CD8-positive, alpha-beta T cell (primary cell): ENCODE measurements at regions of chr12 and their contacts with region 1.

Region 1: DNA sequence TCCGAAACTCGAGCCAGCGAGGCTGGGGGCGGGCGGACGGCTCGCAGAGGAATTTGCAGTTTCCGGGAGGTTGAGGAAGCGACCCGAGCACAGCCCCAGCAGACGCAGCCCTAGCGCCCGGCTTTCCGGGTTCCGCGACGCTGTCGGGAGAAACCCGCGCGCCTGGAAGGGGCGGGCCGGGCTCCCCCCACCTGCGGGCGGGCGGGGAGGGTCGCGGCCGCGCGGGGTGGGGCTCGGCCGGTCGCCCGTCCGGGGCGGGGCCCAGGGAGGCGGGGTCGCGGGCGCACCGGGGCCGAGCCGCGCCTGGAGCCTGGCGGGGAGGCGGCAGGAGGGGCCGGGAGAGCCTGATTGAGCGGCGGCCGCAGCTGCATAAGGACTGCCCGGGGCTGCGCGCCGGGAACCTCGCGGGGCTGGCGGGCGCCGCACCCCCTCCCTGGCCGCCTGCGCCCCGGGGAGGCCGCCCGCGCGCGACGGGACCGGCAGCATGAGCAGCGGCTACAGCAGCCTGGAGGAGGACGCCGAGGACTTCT is at the start of gene RASSF3:
- DNase-seq: peak; percentile 39 to 90 (median 78)
- ATAC-seq: peak; percentile 62
- H3K4me3 ChIP-seq: peak within 1 kb of the TSS; percentile 96
- H3K4me3 Mint-ChIP-seq: peak within 1 kb of the TSS; percentile 90
- H3K27ac ChIP-seq: peak within 1 kb of the TSS; percentile 58 to 82
- H3K27ac Mint-ChIP-seq: peak within 1 kb of the TSS; percentile 96
- H3K4me1 ChIP-seq: peaks cover 21% of the 10 kb centered on the region
- H3K4me1 Mint-ChIP-seq: peaks cover 34% of the 10 kb centered on the region
- H3K27me3 ChIP-seq: no peaks in the 10 kb centered on the region
- H3K27me3 Mint-ChIP-seq: no peaks in the 10 kb centered on the region
- CTCF ChIP-seq: no peak
- total RNA-seq, gene RASSF3: 109 to 118 TPM

Region 2: GRCh38 chr12:64403707-64404469 is 206.3 kb before region 1 on chr12 and contains the start of gene XPOT:
- CTCF ChIA-PET with region 1: interaction called, 3 read pairs
- POLR2A ChIA-PET with region 1: no interaction called
- intact Hi-C with region 1: loop called (anchors 5 to 10 kb)
- DNase-seq: peak; percentile 85 to 99 (median 90)
- ATAC-seq: peak; percentile 87
- H3K4me3 ChIP-seq: peak within 1 kb of the TSS; percentile 92 to 98
- H3K4me3 Mint-ChIP-seq: peak within 1 kb of the TSS; percentile 97
- H3K27ac ChIP-seq: peak within 1 kb of the TSS; percentile 79 to 85
- H3K27ac Mint-ChIP-seq: peak within 1 kb of the TSS; percentile 98
- H3K4me1 ChIP-seq: peaks cover 9% of the 10 kb centered on the region
- H3K4me1 Mint-ChIP-seq: peaks cover 28% of the 10 kb centered on the region
- H3K27me3 ChIP-seq: no peaks in the 10 kb centered on the region
- H3K27me3 Mint-ChIP-seq: no peaks in the 10 kb centered on the region
- CTCF ChIP-seq: no peak
- total RNA-seq, gene XPOT: 37.9 to 39.5 TPM

Region 3: DNA sequence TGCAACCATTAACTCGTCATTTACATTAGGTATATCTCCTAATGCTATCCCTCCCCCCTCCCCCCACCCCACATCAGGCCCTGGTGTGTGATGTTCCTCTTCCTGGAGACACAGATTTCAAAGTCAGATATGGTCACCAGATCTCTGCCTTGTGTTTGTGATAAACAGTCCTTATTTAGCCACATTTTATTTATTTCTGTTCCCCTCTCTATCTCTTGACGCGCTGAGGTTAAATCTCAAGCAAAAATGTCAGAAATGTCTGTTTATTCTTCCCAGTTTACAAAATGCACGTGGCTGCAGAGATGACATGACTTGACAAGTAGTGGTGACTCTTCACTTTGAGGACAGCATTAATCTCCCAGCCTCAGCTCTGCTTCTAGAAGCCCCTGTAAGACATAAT is 11.4 kb before region 1 on chr12:
- CTCF ChIA-PET with region 1: interaction called, 5 read pairs
- POLR2A ChIA-PET with region 1: interaction called, 3 read pairs
- intact Hi-C with region 1: loop called in 1 of 2 experiments (anchors 1 kb)
- DNase-seq: no peak
- ATAC-seq: peak; percentile 6
- H3K4me3 ChIP-seq: no peak overlapping the region
- H3K4me3 Mint-ChIP-seq: no peak overlapping the region
- H3K27ac ChIP-seq: no peak overlapping the region
- H3K27ac Mint-ChIP-seq: no peak overlapping the region
- H3K4me1 ChIP-seq: peaks cover 34% of the 10 kb centered on the region
- H3K4me1 Mint-ChIP-seq: peaks cover 37% of the 10 kb centered on the region
- H3K27me3 ChIP-seq: no peaks in the 10 kb centered on the region
- H3K27me3 Mint-ChIP-seq: no peaks in the 10 kb centered on the region
- CTCF ChIP-seq: no peak

Region 4: DNA sequence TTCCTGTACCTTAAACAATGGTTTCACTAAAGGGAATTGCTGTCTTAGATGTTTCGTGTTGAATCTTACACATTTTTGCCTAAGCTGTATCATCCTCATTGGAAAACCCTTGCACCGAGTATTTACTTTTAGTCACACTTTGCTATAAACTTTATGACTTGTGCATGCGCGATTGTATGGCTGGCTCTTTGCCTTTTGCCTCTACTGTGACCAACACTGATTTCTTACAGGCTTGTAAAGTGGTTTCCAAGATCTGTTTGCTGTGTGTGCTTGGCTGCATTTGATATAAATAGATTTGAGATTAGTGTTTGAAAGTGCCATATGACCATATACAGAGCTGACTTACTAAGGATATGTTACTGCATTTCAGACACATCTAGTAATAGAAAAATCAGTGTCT is 40.5 kb after region 1 on chr12:
- CTCF ChIA-PET with region 1: no interaction called
- POLR2A ChIA-PET with region 1: no interaction called
- intact Hi-C with region 1: loop called in 1 of 2 experiments (anchors 5 kb)
- DNase-seq: no peak
- ATAC-seq: no peak
- H3K4me3 ChIP-seq: no peak overlapping the region
- H3K4me3 Mint-ChIP-seq: peak overlapping the region; percentile 0
- H3K27ac ChIP-seq: no peak overlapping the region
- H3K27ac Mint-ChIP-seq: peak overlapping the region; percentile 68
- H3K4me1 ChIP-seq: peaks cover 62% of the 10 kb centered on the region
- H3K4me1 Mint-ChIP-seq: peaks cover 78% of the 10 kb centered on the region
- H3K27me3 ChIP-seq: no peaks in the 10 kb centered on the region
- H3K27me3 Mint-ChIP-seq: no peaks in the 10 kb centered on the region
- CTCF ChIP-seq: no peak

Region 5: GRCh38 chr12:64687816-64688215 is 77.6 kb after region 1 on chr12:
- CTCF ChIA-PET with region 1: interaction called, 18 read pairs
- POLR2A ChIA-PET with region 1: interaction called, 32 read pairs
- intact Hi-C with region 1: loop called (anchors 2 kb)
- DNase-seq: peak in 2 of 9 experiments; percentile 40 to 63
- ATAC-seq: peak; percentile 9
- H3K4me3 ChIP-seq: no peak overlapping the region
- H3K4me3 Mint-ChIP-seq: peak overlapping the region; percentile 67
- H3K27ac ChIP-seq: peak overlapping the region; percentile 26 to 57
- H3K27ac Mint-ChIP-seq: peak overlapping the region; percentile 94
- H3K4me1 ChIP-seq: peaks cover 95% of the 10 kb centered on the region
- H3K4me1 Mint-ChIP-seq: peaks cover 77% of the 10 kb centered on the region
- H3K27me3 ChIP-seq: no peaks in the 10 kb centered on the region
- H3K27me3 Mint-ChIP-seq: no peaks in the 10 kb centered on the region
- CTCF ChIP-seq: no peak

Region 6: DNA sequence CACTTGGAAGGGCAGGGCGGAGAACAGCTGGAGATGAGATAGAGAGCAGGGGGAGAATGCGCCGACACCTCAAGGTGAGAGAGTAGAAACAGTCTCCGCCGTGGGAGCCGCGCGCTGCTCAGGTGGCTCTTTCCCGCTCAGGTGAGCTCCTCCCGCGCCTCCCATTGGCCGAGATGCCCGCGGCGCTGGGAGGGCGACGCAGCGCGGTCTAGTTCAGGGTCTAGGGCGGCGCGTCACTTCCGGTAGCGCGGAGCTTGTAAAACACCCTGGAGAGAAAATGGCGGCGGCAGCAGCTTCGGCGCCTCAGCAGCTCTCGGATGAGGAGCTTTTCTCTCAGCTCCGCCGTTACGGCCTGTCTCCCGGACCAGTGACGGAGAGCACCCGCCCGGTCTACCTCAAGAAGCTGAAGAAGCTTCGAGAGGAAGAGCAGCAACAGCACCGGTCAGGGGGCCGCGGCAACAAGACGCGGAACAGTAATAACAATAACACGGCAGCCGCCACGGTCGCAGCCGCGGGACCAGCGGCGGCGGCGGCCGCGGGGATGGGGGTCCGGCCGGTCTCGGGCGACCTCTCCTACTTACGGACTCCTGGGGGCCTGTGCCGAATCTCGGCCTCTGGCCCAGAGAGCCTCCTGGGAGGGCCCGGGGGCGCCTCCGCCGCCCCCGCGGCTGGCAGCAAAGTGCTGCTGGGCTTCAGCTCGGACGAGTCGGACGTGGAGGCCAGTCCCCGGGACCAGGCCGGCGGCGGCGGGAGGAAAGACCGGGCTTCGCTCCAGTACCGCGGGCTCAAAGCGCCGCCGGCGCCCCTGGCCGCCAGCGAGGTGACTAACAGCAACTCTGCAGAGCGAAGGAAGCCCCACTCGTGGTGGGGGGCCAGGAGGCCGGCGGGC is 559.4 kb after region 1 on chr12 and contains the start of gene LEMD3:
- CTCF ChIA-PET with region 1: no interaction called
- POLR2A ChIA-PET with region 1: no interaction called
- intact Hi-C with region 1: loop called in 1 of 2 experiments (anchors 5 kb)
- DNase-seq: peak; percentile 87 to 98 (median 94)
- ATAC-seq: peak; percentile 87
- H3K4me3 ChIP-seq: peak within 1 kb of the TSS; percentile 82 to 91
- H3K4me3 Mint-ChIP-seq: peak within 1 kb of the TSS; percentile 99
- H3K27ac ChIP-seq: peak within 1 kb of the TSS; percentile 83 to 94
- H3K27ac Mint-ChIP-seq: peak within 1 kb of the TSS; percentile 100
- H3K4me1 ChIP-seq: peaks cover 37% of the 10 kb centered on the region
- H3K4me1 Mint-ChIP-seq: peaks cover 45% of the 10 kb centered on the region
- H3K27me3 ChIP-seq: no peaks in the 10 kb centered on the region
- H3K27me3 Mint-ChIP-seq: no peaks in the 10 kb centered on the region
- CTCF ChIP-seq: no peak
- total RNA-seq, gene LEMD3: 75.2 to 77.9 TPM